Vagina (tissue), 2 donors: ENCODE measurements at regions of chr17 and their contacts with region 1.

Region 1: DNA sequence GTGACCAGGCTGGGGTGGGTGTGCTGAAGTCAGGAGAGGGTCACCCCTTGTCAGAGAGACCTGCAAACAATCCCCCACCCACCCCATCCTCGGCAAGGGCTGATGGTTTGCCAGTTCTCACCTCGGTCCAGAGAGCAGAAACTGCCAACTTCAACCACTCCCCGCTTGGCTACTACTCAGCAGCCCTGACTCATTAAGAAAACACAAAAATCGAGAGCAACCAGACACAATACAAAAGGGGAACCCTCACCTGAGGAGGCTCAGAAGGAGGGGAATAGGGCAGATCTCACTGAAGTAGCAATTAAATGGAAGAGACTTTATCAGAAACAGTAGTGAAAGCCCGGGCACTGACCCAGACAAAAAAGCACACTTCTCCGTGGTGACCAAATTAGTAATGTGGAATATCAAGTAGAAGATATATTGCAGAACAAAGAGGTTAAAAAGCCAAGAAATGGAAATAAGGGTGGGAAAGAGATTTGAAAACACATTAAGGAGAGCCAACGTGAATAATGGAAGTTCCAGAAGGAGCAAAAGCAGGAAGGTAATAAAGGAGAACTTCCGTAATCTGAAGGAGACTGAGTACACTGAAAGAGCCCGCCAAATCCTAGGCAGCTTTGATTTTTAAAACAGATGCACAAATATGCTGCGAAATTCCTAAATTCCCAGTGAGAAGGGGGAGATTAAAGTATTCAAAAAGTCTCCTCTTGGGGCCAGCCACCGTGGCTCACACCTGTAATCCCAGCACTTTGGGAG is 23.6 kb downstream of the CENPV start:
- DNase-seq: no peak
- H3K4me3 ChIP-seq: no peak overlapping the region
- H3K27ac ChIP-seq: no peak overlapping the region
- H3K4me1 ChIP-seq: peaks cover 13% of the 10 kb centered on the region
- H3K27me3 ChIP-seq: no peaks in the 10 kb centered on the region
- CTCF ChIP-seq: no peak
- POLR2A ChIP-seq: no peak

Region 2: GRCh38 chr17:16313139-16314090 is 16.3 kb before region 1 on chr17:
- intact Hi-C with region 1: loop called (anchors 1 kb)
- DNase-seq: no peak
- H3K4me3 ChIP-seq: no peak overlapping the region
- H3K27ac ChIP-seq: no peak overlapping the region
- H3K4me1 ChIP-seq: no peaks in the 10 kb centered on the region
- H3K27me3 ChIP-seq: no peaks in the 10 kb centered on the region
- CTCF ChIP-seq: no peak
- POLR2A ChIP-seq: no peak